ENCODE measurements at regions of chr4 and their contacts with region 1.

Region 1: GRCh38 chr4:118338981-118339765 is 13.6 kb downstream of the PRSS12 start:
- DNase-seq: no peak
- H3K4me3 Mint-ChIP-seq: no peak overlapping the region
- H3K27ac Mint-ChIP-seq: no peak overlapping the region
- H3K4me1 Mint-ChIP-seq: no peaks in the 10 kb centered on the region
- H3K27me3 Mint-ChIP-seq: peaks cover 11% of the 10 kb centered on the region

Region 2: GRCh38 chr4:118313098-118313497 is 26.1 kb before region 1 on chr4:
- CTCF ChIA-PET with region 1: no interaction called
- POLR2A ChIA-PET with region 1: no interaction called
- intact Hi-C with region 1: no loop called
- DNase-seq: no peak
- H3K4me3 Mint-ChIP-seq: no peak overlapping the region
- H3K27ac Mint-ChIP-seq: no peak overlapping the region
- H3K4me1 Mint-ChIP-seq: no peaks in the 10 kb centered on the region
- H3K27me3 Mint-ChIP-seq: peaks cover 4% of the 10 kb centered on the region

Region 3: DNA sequence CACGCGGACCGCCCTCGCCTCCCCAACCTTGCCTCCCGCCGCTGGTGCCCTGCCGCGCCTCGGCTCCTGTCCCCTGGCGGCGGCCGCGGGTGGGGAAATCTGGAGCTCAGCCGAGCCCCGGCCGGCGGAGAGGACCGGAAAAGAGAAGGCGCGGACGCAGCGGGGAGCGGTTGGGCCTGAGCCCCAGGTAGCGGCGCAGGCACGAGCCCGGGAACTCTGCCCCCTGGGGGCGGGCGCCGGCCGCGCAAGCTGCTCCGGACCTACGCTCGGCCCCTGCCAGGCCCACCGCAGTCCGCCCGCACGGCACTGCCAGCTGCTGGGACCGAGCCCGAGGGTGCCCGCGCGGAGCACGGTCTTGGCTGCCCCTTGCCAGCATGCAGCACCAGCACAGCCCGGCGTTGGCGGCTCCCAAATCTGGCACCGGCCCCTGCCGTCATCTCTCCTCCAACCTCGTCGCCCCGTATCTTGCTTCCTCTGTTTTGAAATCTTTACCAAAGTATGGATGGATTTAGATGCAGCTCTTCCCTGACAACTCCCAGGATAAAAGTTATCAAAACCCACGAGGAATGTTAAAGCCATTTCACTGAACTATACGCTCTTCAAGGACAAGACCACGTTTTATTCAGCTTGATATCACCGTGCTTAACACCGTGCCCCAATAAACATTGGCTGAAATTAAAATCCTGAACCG is 13.8 kb after region 1 on chr4 and contains the start of gene PRSS12:
- CTCF ChIA-PET with region 1: interaction called, 31 read pairs
- POLR2A ChIA-PET with region 1: no interaction called
- intact Hi-C with region 1: no loop called
- DNase-seq: peak; percentile 73
- H3K4me3 Mint-ChIP-seq: peak within 1 kb of the TSS; percentile 63
- H3K27ac Mint-ChIP-seq: no peak within 1 kb of the TSS
- H3K4me1 Mint-ChIP-seq: peaks cover 11% of the 10 kb centered on the region
- H3K27me3 Mint-ChIP-seq: peaks cover 55% of the 10 kb centered on the region
- total RNA-seq, gene PRSS12: not detected

Region 4: GRCh38 chr4:118398226-118399090 is 59.3 kb after region 1 on chr4:
- CTCF ChIA-PET with region 1: no interaction called
- POLR2A ChIA-PET with region 1: no interaction called
- intact Hi-C with region 1: no loop called
- DNase-seq: no peak
- H3K4me3 Mint-ChIP-seq: no peak overlapping the region
- H3K27ac Mint-ChIP-seq: no peak overlapping the region
- H3K4me1 Mint-ChIP-seq: no peaks in the 10 kb centered on the region
- H3K27me3 Mint-ChIP-seq: peaks cover 11% of the 10 kb centered on the region

Measured in activated CD4-positive, alpha-beta memory T cell treated with anti-CD3 and anti-CD28 coated beads for 36 hours (primary cell).